HepG2 (cell line): ENCODE measurements at regions of chr6 and their contacts with region 1.

Region 1: DNA sequence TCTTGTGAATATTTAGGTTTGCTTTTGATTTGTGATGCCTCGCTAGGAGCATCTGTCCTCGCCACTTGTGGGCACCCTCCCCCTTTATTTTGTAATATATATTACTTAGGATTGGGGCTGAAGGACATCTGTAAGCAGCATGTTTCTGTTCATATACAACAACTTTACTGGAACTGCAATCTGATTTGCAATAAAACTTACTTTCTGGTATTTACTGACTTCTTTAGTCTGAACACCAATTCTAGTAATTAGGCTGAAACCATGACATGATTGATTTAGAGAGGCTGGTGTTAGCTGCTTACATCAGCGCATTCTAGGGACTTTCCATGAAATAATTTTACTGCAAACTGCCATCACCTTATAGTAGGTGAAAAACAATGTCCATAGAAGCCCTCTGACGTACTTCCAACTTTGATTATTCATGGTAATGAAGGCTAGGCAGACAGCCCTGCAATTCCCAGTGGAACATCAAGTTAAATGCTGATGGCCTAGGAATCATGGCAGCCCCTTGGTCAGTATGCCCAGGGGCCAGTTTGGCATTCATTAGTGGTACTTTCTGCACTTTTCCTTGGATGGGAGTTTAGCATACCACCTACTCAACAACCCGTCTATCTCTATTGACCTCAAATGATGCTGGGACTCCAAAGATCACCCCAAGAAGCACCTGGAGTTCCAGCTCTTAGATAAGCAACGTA is 132.9 kb upstream of the MCHR2 start:
- DNase-seq: no peak
- ATAC-seq: no peak
- H3K4me3 ChIP-seq: no peak overlapping the region
- H3K27ac ChIP-seq: no peak overlapping the region
- H3K4me1 ChIP-seq: no peaks in the 10 kb centered on the region
- H3K27me3 ChIP-seq: no peaks in the 10 kb centered on the region
- CTCF ChIP-seq: no peak
- EP300 ChIP-seq: no peak
- POLR2A ChIP-seq: no peak
- RAD21 ChIP-seq: no peak

Region 2: DNA sequence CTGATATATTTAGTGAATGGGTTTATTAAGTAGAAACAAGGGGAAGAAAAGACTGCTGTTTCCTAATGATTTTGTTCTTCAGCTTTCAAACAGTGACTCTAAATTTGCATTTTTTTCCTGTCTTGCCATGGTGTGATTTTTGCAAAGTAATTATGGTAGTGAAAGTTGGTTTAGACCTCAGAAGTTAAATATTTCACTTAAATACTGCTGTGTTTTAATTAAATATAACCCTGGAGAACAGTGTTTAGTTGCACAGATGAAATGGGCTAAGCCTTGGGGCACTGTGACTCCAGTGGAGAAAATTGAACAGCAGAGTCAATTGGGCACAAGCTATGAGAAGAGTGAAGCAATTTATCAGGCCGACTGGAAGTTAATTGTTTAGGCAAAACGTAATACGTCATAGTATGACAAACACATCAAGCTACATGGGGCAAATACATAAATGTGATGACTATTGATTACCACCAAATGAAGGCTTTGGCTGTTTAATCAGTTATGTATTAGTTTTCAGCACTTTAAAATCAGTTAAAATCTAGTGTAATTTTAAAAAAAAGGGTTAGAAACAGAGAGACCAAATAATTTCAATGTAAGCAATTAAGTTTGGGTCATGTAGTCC is 21.7 kb before region 1 on chr6:
- CTCF ChIA-PET with region 1: no interaction called
- POLR2A ChIA-PET with region 1: no interaction called
- in situ Hi-C with region 1: no loop called
- intact Hi-C with region 1: loop called (anchors 1 kb)
- DNase-seq: no peak
- ATAC-seq: no peak
- H3K4me3 ChIP-seq: no peak overlapping the region
- H3K27ac ChIP-seq: no peak overlapping the region
- H3K4me1 ChIP-seq: no peaks in the 10 kb centered on the region
- H3K27me3 ChIP-seq: no peaks in the 10 kb centered on the region
- CTCF ChIP-seq: no peak
- EP300 ChIP-seq: no peak
- POLR2A ChIP-seq: no peak
- RAD21 ChIP-seq: no peak